Gastrocnemius medialis (tissue), 4 donors: ENCODE measurements at regions of chr2 and their contacts with region 1.

Region 1: GRCh38 chr2:226799181-226799975 is at the start of gene IRS1:
- DNase-seq: peak; percentile 45 to 49
- ATAC-seq: peak; percentile 11 to 24
- H3K4me3 ChIP-seq: peak within 1 kb of the TSS; percentile 79 to 95 (median 88)
- H3K27ac ChIP-seq: peak within 1 kb of the TSS; percentile 95 to 99 (median 98)
- H3K4me1 ChIP-seq: peaks cover 38 to 44% of the 10 kb centered on the region in 2 donors
- H3K27me3 ChIP-seq: no peaks in the 10 kb centered on the region
- CTCF ChIP-seq: peak in 2 of 5 experiments; percentile 42 to 73
- POLR2A ChIP-seq: peak; percentile 21 to 40
- total RNA-seq, gene IRS1: 2.2 to 71.1 (median 6.3) TPM

Region 2: GRCh38 chr2:225660262-225661131 is 1138.9 kb before region 1 on chr2:
- in situ Hi-C with region 1: loop called in 2 of 4 experiments (anchors 5 to 10 kb)
- intact Hi-C with region 1: no loop called
- DNase-seq: peak in 1 of 2 donors; percentile 33
- ATAC-seq: peak in 1 of 2 donors; percentile 56
- H3K4me3 ChIP-seq: no peak overlapping the region
- H3K27ac ChIP-seq: no peak overlapping the region
- H3K4me1 ChIP-seq: no peaks in the 10 kb centered on the region
- H3K27me3 ChIP-seq: no peaks in the 10 kb centered on the region
- CTCF ChIP-seq: peak in 4 of 5 experiments; percentile 51 to 79 (median 65)
- POLR2A ChIP-seq: no peak

Region 3: DNA sequence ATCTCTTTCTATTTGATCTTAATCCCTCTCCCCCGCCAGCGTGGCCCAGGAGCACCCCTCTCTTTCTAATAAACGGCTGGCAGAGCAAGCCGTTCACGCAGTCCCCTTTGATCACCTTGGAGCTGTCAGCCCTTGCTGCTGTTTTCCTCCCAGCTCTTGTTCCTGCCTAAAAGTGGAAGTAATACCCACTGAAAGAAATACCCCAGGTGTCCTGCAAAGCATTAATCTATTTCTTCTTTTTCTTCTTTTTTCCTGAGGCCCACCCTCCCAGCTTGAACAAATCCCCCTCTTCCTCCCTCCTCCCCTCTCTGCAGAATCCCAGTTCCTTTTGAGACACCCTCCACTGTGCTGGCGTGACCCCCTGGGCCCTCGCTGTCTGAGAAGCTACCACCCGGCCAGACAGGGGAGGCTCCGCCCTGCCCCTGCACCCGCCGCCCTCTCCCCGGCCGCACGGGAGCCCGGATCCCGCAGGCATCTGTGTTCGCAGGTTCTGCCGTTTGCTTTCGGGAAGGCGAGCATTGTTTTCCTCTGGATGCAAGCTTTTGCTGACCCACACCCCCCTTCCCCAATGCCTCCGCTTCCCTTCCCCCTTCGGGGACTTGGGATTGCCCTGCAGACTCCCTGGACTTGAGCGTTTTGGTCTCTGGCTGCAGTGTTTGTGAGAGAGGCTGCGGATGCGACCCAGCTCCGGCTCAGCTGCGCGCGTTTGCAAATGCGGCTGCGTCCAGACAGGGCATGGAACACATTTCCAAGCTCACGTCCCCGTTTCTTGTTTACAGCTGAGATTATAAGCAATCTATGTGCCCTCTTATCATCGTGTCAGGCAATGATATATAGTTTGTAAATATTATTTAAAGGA is 768.4 kb before region 1 on chr2:
- in situ Hi-C with region 1: loop called in 2 of 4 experiments (anchors 25 kb)
- intact Hi-C with region 1: no loop called
- DNase-seq: peak; percentile 9 to 25
- ATAC-seq: peak; percentile 72 to 81
- H3K4me3 ChIP-seq: peak overlapping the region; percentile 57 to 65 (median 64)
- H3K27ac ChIP-seq: peak overlapping the region in 3 of 4 donors; percentile 14 to 45 (median 43)
- H3K4me1 ChIP-seq: no peaks in the 10 kb centered on the region
- H3K27me3 ChIP-seq: no peaks in the 10 kb centered on the region
- CTCF ChIP-seq: no peak
- POLR2A ChIP-seq: no peak

Region 4: DNA sequence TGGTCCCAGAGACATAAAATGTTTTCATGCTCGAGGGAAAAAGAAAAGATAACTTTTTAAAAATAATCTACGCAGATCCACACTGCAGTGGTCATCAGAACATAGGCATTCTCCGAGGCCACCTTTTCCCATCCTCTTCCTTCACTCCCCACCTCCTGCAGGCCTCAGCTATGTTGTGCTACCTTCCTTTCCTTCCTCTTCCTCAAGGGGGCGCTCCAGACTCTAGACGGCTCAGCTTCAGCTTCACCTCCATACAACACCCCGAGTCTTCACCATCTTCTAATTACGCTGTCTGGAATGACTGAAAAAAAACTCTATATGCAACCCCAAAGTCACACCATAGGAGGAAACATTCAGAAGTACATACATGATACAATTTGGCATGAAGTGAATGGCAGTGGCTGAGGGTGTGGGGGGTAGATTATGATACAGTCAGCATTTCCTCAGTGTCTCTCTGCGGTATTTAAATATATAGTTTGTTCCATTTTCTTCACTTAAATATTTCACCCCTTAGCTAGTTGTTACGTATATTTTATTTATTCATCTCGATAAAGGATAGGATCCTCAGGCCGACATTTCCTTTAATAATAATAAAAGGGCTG is 583.4 kb before region 1 on chr2:
- in situ Hi-C with region 1: loop called in 3 of 4 experiments (anchors 10 to 25 kb)
- intact Hi-C with region 1: loop called (anchors 2 kb)
- DNase-seq: peak in 1 of 2 donors; percentile 35
- ATAC-seq: peak; percentile 63 to 78
- H3K4me3 ChIP-seq: no peak overlapping the region
- H3K27ac ChIP-seq: no peak overlapping the region
- H3K4me1 ChIP-seq: peaks cover 7 to 10% of the 10 kb centered on the region in 2 donors
- H3K27me3 ChIP-seq: no peaks in the 10 kb centered on the region
- CTCF ChIP-seq: peak; percentile 38 to 65 (median 45)
- POLR2A ChIP-seq: no peak

Region 5: DNA sequence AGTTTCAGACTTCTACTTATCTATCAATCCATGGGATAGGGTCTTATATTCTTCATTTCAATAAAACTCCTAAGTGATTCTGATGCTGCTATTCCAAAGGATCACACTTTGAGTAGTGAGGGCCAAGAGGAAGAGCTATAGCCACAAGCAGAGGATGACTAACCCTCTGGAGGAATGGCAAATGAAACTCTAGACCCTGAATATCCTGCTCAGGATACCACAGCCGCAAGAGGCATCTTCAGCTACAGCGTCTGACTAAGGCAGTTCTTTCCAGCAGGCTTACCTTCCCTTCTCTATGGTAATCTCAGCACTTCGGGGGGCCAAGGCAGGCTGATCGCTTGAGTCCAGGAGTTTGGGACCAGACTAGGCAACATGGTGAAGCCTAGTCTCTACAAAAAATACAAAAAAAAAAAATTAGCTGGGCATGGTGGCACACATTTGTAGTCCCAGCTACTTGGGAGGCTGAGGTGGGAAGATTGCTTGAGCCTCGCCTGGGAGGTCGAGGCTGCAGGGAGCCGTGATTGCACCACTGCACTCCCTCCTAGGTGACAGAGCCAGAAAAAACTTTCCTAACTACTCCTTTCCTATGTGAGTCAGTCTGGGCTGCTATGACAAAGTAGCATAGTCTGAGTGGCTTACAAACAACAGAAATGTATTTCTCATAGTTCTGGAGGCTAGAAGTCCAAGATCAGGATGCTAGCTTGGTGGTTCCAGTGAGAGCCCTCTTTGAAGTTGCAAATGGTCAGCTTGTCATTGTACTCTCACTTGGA is 371.7 kb before region 1 on chr2:
- in situ Hi-C with region 1: no loop called
- intact Hi-C with region 1: loop called (anchors 1 kb)
- DNase-seq: peak; percentile 49 to 57
- ATAC-seq: peak; percentile 100
- H3K4me3 ChIP-seq: no peak overlapping the region
- H3K27ac ChIP-seq: peak overlapping the region; percentile 71 to 80 (median 74)
- H3K4me1 ChIP-seq: peaks cover 13 to 25% of the 10 kb centered on the region in 2 donors
- H3K27me3 ChIP-seq: no peaks in the 10 kb centered on the region
- CTCF ChIP-seq: no peak
- POLR2A ChIP-seq: no peak

Region 6: GRCh38 chr2:226526716-226527115 is 272.7 kb before region 1 on chr2:
- in situ Hi-C with region 1: no loop called
- intact Hi-C with region 1: loop called (anchors 5 kb)
- DNase-seq: no peak
- ATAC-seq: no peak
- H3K4me3 ChIP-seq: no peak overlapping the region
- H3K27ac ChIP-seq: no peak overlapping the region
- H3K4me1 ChIP-seq: no peaks in the 10 kb centered on the region
- H3K27me3 ChIP-seq: no peaks in the 10 kb centered on the region
- CTCF ChIP-seq: no peak
- POLR2A ChIP-seq: no peak

Region 7: DNA sequence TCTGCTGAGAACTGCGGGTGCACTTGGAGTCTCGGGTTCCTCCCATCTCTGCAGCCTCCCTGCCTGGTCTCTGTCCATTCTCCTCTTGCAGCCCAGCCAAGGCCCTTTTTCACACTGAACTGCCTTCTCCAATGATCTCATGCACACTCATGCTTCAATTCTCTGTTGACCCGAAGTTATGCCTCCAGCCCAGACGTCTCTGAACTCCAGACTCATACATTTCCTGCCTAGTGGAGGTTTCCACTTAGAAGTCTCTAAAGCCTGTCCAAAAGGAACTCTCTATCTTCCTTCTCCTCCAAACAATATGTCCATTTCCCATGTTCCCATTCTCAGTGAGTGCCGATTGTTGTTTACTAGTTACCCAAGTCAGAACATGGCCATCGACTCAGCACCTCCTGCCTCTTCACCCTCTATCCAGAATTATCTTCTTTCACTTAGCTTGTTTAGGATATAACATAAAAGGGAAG is 154.9 kb before region 1 on chr2:
- in situ Hi-C with region 1: no loop called
- intact Hi-C with region 1: no loop called
- DNase-seq: no peak
- ATAC-seq: peak in 1 of 2 donors; percentile 53
- H3K4me3 ChIP-seq: no peak overlapping the region
- H3K27ac ChIP-seq: peak overlapping the region in 1 of 4 donors; percentile 22
- H3K4me1 ChIP-seq: peaks cover 8 to 9% of the 10 kb centered on the region in 2 donors
- H3K27me3 ChIP-seq: no peaks in the 10 kb centered on the region
- CTCF ChIP-seq: no peak
- POLR2A ChIP-seq: no peak

Region 8: DNA sequence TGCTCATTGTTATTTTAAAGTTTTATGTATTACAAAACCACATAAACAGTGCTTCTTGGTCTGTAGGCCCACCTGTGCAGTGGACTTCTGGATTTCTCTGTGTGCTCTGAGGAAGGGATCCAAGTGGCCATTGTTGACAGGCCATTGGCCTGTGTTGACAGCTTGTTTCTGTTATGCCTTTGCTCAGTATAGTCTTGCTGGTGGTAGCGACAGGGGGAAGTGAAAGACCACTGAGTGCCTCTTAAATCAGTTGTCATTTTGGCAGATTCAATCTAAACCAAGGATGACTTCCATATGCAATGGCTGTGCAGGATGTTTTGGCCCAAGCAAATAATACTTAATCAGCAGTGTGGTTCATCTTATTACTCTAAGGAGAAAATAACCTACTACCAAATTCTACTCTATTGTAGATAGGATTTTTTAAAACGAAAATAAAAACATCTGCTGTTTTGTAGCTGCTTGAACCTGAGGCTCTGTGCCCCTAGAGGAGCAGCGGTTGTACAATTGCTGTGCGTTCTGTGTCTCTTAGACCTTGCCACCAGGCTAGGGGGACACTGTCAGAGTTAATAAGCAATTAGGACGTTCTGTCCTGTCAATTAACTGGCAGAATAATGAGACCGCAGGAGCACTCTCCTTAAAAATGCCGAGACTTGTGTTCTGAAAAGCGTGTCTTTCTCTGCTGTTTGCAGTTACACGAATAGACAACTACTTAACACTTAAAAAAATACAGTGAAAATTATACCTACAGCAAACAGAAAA is 144.7 kb after region 1 on chr2:
- in situ Hi-C with region 1: no loop called
- intact Hi-C with region 1: no loop called
- DNase-seq: no peak
- ATAC-seq: no peak
- H3K4me3 ChIP-seq: no peak overlapping the region
- H3K27ac ChIP-seq: no peak overlapping the region
- H3K4me1 ChIP-seq: no peaks in the 10 kb centered on the region
- H3K27me3 ChIP-seq: no peaks in the 10 kb centered on the region
- CTCF ChIP-seq: no peak
- POLR2A ChIP-seq: no peak

Region 9: DNA sequence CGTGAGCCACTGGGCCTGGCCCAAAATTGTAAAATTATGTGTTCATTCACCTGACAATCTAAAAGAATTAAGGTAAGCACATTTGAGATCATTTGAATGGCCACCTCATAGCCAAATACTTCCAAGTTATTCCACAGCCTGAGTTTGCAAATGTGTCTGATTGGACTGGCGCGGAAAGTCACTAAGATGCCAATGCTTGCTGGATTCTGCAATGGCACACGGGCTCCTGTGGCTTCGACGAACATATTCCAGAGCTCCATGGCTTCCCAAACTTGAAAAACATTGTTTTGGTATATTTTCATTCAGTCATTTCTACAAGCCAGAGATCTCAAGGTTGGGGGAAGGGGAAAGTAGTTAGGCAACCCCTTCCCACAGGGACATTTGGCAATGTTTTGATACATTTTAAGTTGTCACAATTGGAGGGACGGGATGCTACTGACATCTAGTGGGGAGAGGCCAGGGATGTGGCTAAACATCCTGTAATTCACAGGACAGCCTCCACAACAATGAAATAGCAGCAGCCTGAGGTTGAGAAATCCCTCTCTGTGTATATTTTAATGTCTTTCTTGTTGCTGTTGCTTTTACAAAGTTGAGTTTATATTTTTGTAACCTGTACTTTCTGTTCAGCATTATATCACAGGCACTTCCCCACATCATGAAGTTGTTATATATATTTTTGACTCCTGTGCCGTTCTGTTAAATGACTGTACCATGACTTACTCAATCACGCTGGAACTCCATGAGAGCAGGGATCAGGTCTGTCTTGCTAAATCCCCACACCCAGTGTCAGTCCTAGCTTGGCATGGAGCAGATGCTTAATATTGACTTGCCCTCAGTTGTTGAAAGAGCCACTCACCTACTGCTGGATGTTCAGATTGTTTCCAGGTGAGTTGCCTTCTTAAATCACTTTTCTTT is 307.7 kb after region 1 on chr2:
- in situ Hi-C with region 1: no loop called
- intact Hi-C with region 1: no loop called
- DNase-seq: no peak
- ATAC-seq: no peak
- H3K4me3 ChIP-seq: no peak overlapping the region
- H3K27ac ChIP-seq: no peak overlapping the region
- H3K4me1 ChIP-seq: no peaks in the 10 kb centered on the region
- H3K27me3 ChIP-seq: no peaks in the 10 kb centered on the region
- CTCF ChIP-seq: peak in 1 of 5 experiments; percentile 14
- POLR2A ChIP-seq: no peak